ENCODE measurements at regions of chr6 and their contacts with region 1.

Region 1: GRCh38 chr6:132096245-132096644 is 145.1 kb upstream of the CCN2 start:
- DNase-seq: no peak
- H3K4me3 Mint-ChIP-seq: no peak overlapping the region
- H3K27ac Mint-ChIP-seq: no peak overlapping the region
- H3K4me1 Mint-ChIP-seq: no peaks in the 10 kb centered on the region
- H3K27me3 Mint-ChIP-seq: no peaks in the 10 kb centered on the region

Region 2: DNA sequence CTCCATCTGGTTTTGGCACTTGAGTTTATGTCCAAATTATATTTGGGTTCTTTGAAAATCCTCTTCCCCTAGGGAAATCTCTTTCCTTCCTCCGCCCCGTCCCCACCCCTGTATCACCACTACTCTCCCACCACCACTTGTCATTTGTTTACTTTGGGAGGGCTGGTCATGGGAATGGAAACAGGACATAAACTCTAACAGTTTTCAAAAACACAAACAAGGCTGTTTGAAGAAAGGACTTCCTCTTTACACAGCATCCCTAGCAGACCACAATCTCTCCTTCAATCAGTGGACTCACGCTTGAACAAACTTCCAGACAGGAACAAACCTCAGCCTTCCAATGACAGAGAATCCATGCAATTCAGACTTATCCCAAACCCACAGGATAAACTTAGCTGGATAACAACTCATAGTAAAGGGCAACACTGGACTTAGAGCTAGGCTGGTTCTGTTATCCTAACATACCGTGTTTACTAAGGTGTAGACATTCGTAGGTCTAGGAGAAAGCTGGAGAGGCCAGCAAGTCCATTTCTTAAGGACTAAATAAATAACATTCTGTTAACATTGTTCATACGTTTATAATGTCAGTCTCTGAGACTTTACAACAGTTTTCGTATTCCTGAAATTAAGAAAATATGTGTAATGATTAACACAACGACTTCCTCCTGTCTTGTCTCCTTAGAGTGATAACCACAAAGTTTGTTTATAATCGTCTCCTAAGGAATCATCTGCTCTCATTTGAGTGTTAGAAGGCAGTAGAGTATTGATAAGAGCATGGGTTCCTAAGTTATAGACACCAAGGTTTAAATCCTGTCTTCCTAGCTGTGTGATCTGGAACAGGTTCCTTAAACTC is 341.3 kb before region 1 on chr6:
- intact Hi-C with region 1: no loop called
- DNase-seq: no peak
- H3K4me3 Mint-ChIP-seq: no peak overlapping the region
- H3K27ac Mint-ChIP-seq: no peak overlapping the region
- H3K4me1 Mint-ChIP-seq: no peaks in the 10 kb centered on the region
- H3K27me3 Mint-ChIP-seq: peaks cover 11% of the 10 kb centered on the region

Region 3: GRCh38 chr6:131808460-131809269 is 287.6 kb before region 1 on chr6:
- intact Hi-C with region 1: no loop called
- DNase-seq: no peak
- H3K4me3 Mint-ChIP-seq: peak overlapping the region; percentile 70
- H3K27ac Mint-ChIP-seq: no peak overlapping the region
- H3K4me1 Mint-ChIP-seq: peaks cover 7% of the 10 kb centered on the region
- H3K27me3 Mint-ChIP-seq: peaks cover 51% of the 10 kb centered on the region

Region 4: GRCh38 chr6:132115714-132116366 is 19.6 kb after region 1 on chr6:
- intact Hi-C with region 1: loop called (anchors 1 kb)
- DNase-seq: no peak
- H3K4me3 Mint-ChIP-seq: no peak overlapping the region
- H3K27ac Mint-ChIP-seq: no peak overlapping the region
- H3K4me1 Mint-ChIP-seq: no peaks in the 10 kb centered on the region
- H3K27me3 Mint-ChIP-seq: peaks cover 1% of the 10 kb centered on the region

Region 5: GRCh38 chr6:132136981-132137380 is 40.7 kb after region 1 on chr6:
- intact Hi-C with region 1: no loop called
- DNase-seq: no peak
- H3K4me3 Mint-ChIP-seq: no peak overlapping the region
- H3K27ac Mint-ChIP-seq: no peak overlapping the region
- H3K4me1 Mint-ChIP-seq: no peaks in the 10 kb centered on the region
- H3K27me3 Mint-ChIP-seq: peaks cover 7% of the 10 kb centered on the region